Activated T-helper 1 cell treated with anti-CD3 and anti-CD28 coated beads, Interleukin-12 subunit alpha, Interleukin-12 subunit beta, Interleukin-2, Interleukin-4 antibody, amounts not matched to agents 30 ng/mL and 10 ng/mL and 1 ng/mL, durations not matched to agents 14 hours and 24 hours and 36 hours (primary cell): ENCODE measurements at regions of chr4 and their contacts with region 1.

Region 1: DNA sequence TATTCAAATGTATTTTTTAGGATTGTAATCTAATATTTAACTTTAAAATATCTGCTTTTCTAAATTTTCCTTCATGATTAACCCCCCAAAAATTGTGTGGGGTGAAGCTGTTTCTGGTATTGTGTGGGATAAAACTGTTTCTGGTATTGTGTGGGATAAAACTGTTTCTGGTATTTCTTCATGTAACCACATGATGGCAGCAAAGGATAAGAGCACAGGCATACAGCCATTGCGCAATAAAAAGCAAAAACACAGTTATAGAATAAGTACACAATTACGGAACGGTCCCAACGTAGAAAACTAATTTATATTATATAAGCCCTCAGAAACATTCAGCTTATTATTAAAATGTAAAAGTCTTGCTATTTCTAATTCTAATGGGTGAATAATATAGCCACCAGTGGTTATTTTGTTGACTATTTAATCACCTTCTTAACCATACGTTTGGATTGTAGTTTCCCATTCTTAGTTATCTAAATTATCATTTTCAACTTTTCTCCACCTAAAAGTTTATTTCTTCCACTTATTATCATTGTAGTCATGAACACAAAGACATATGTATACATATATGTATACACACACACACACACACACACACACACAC is 333.9 kb upstream of the FSTL5 start:
- DNase-seq: no peak
- H3K4me3 Mint-ChIP-seq: no peak overlapping the region
- H3K27ac Mint-ChIP-seq: no peak overlapping the region
- H3K4me1 Mint-ChIP-seq: no peaks in the 10 kb centered on the region
- H3K27me3 Mint-ChIP-seq: peaks cover 2% of the 10 kb centered on the region

Region 2: DNA sequence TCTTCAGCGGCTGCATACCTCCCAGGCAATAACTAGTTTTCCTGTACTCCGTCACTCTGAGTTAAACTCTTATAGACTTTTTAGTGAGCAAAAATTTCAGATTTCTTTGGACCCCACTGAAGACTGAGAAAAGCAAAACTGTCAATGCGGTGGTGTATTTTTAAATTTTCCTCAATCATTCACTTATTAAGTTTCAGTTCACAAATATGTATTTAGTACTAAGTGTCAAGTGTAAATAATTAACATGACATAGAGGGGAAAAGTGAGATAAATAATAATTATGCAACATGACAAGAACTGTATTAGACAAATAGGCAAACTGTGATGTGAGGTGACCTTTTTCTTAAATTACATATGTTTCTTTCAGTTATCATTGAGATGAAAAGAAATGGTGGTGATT is 544.6 kb after region 1 on chr4:
- intact Hi-C with region 1: loop called (anchors 1 kb)
- DNase-seq: no peak
- H3K4me3 Mint-ChIP-seq: no peak overlapping the region
- H3K27ac Mint-ChIP-seq: no peak overlapping the region
- H3K4me1 Mint-ChIP-seq: no peaks in the 10 kb centered on the region
- H3K27me3 Mint-ChIP-seq: peaks cover 6% of the 10 kb centered on the region

Region 3: DNA sequence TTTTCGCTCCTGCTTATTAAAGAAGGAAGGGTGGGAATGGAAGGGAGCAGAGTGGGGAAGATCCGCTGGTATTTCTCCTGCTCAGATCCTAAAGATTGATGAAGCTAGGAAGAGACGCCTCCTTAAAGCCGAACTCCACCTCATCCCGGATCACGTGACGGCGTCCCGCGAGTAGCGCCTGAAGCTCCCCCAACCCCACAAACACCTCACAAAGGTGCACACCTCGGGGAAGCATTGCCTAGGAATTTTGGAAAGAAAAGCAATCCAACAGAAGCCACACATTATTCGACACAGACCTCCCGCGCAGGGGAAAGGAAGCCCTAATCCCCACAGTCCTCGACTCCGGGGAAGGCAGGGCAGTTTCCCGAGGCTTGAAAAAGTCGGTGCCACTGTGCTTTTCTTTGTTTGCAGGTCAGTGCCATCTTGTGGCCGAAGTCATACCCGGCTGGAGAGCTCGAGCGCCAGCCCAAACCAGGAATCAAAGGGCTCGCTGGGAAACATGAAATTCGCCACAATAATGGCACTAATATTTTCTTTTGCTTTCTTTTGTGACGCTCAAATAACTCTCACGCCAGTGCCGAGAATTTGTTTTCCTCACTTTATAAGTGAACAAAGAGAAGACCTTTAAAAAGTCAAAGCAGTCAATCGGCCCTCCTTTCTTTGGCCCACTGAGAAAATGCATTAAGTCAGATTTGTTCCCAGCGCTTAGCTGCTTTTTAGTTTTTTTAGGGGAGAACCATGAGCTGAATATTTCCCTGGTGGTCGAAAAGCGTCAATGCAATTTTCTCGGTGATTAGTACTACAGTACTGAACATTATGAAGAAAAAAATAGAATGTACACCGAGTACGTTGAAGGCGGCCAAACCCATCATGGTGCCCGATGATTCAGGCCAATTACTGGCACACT is 835.1 kb after region 1 on chr4 and contains the start of gene NPY1R:
- intact Hi-C with region 1: loop called (anchors 1 kb)
- DNase-seq: peak; percentile 1
- H3K4me3 Mint-ChIP-seq: peak within 1 kb of the TSS; percentile 69
- H3K27ac Mint-ChIP-seq: no peak within 1 kb of the TSS
- H3K4me1 Mint-ChIP-seq: peaks cover 10% of the 10 kb centered on the region
- H3K27me3 Mint-ChIP-seq: peaks cover 47% of the 10 kb centered on the region
- total RNA-seq, gene NPY1R: not detected in 2 replicates

Region 4: GRCh38 chr4:163681208-163681821 is 1183.6 kb after region 1 on chr4:
- intact Hi-C with region 1: loop called (anchors 2 kb)
- DNase-seq: no peak
- H3K4me3 Mint-ChIP-seq: no peak overlapping the region
- H3K27ac Mint-ChIP-seq: no peak overlapping the region
- H3K4me1 Mint-ChIP-seq: no peaks in the 10 kb centered on the region
- H3K27me3 Mint-ChIP-seq: peaks cover 2% of the 10 kb centered on the region